Panc1 (cell line): ENCODE measurements at regions of chr14 and their contacts with region 1.

Region 1: DNA sequence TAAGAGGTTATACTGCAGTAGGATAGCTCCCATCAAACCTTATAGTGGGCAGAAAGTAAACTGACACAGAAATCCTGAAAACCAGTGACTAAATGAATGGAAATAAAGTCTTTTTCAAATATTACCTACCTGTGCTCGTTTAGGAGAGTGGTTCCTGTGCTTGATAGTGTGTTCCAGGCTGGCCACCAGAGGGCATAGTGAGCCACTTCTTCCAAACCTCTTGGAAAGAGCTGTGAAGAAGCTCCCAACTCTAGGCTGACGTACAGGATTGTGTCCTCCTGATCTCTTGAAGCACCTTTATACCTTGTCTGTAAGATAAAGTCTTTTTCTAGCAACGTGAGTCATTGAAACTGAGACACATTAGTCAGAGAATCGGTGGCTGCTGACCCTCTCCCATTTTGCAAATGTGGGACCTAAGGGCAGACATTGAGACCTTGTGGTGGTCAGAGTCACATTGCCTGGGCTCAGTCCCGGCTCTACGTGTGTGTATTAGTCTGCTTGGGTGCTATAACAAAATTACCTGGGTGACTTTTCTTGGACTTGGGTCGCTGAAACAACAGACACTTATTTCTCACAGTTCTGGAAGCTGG is 17.6 kb downstream of the TDP1 start:
- DNase-seq: peak; percentile 35
- ATAC-seq: peak; percentile 90
- H3K4me3 ChIP-seq: no peak overlapping the region
- H3K27ac ChIP-seq: no peak overlapping the region
- H3K4me1 ChIP-seq: no peaks in the 10 kb centered on the region
- H3K27me3 ChIP-seq: no peaks in the 10 kb centered on the region
- CTCF ChIP-seq: peak; percentile 85

Region 2: GRCh38 chr14:88142997-88143396 is 1830.3 kb before region 1 on chr14:
- CTCF ChIA-PET with region 1: interaction called, 14 read pairs
- POLR2A ChIA-PET with region 1: no interaction called
- in situ Hi-C with region 1: no loop called
- intact Hi-C with region 1: no loop called
- DNase-seq: no peak
- ATAC-seq: no peak
- H3K4me3 ChIP-seq: no peak overlapping the region
- H3K27ac ChIP-seq: no peak overlapping the region
- H3K4me1 ChIP-seq: no peaks in the 10 kb centered on the region
- H3K27me3 ChIP-seq: no peaks in the 10 kb centered on the region
- CTCF ChIP-seq: no peak

Region 3: GRCh38 chr14:89841855-89842254 is 131.5 kb before region 1 on chr14:
- CTCF ChIA-PET with region 1: no interaction called
- POLR2A ChIA-PET with region 1: no interaction called
- in situ Hi-C with region 1: no loop called
- intact Hi-C with region 1: no loop called
- DNase-seq: no peak
- ATAC-seq: no peak
- H3K4me3 ChIP-seq: no peak overlapping the region
- H3K27ac ChIP-seq: no peak overlapping the region
- H3K4me1 ChIP-seq: no peaks in the 10 kb centered on the region
- H3K27me3 ChIP-seq: no peaks in the 10 kb centered on the region
- CTCF ChIP-seq: no peak

Region 4: DNA sequence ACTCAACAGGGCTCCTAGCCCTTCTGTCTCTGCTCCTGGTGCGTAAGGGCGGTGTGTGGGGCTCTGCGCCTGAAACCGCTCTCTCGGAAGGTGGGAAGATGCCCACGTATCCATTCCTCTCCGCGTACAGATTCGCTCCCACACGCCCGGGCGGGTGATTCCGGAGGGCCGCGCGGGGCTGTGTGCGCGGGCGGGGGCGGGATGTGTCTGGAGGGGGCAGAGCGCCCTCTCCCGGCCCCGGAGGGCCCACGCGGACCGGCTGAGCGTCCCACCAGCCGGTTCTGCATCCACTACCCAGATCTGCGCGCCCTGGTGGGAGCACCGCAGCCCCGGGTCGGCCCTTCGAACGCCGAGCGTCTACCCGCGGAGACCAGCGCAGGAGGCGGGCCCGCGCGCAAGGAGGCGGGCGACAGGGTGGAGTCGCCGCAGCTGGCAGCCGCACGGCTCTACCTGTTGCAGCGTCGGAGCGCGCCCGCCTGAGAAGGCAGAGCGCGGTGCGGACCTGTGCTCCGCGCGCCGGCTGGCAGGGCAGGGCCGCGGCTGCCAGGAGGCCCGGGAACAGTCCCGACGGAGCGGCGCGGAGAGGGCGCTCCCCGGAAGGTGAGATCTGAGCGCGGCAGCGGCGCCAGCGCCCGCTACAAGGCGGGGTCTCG is 87.1 kb after region 1 on chr14:
- CTCF ChIA-PET with region 1: interaction called, 3 read pairs
- POLR2A ChIA-PET with region 1: no interaction called
- in situ Hi-C with region 1: no loop called
- intact Hi-C with region 1: loop called (anchors 5 kb)
- DNase-seq: no peak
- ATAC-seq: peak; percentile 88
- H3K4me3 ChIP-seq: peak overlapping the region; percentile 41 to 54
- H3K27ac ChIP-seq: no peak overlapping the region
- H3K4me1 ChIP-seq: no peaks in the 10 kb centered on the region; the same call in 1 of the 2 replicates
- H3K27me3 ChIP-seq: peaks cover 27% of the 10 kb centered on the region
- CTCF ChIP-seq: peak; percentile 77

Region 5: GRCh38 chr14:90235179-90235976 is 262.0 kb after region 1 on chr14:
- CTCF ChIA-PET with region 1: interaction called, 3 read pairs
- POLR2A ChIA-PET with region 1: no interaction called
- in situ Hi-C with region 1: no loop called
- intact Hi-C with region 1: loop called (anchors 2 kb)
- DNase-seq: peak; percentile 60
- ATAC-seq: peak; percentile 91
- H3K4me3 ChIP-seq: no peak overlapping the region
- H3K27ac ChIP-seq: no peak overlapping the region
- H3K4me1 ChIP-seq: no peaks in the 10 kb centered on the region
- H3K27me3 ChIP-seq: no peaks in the 10 kb centered on the region
- CTCF ChIP-seq: peak; percentile 91